ENCODE measurements at regions of chr10 and their contacts with region 1.

Region 1: DNA sequence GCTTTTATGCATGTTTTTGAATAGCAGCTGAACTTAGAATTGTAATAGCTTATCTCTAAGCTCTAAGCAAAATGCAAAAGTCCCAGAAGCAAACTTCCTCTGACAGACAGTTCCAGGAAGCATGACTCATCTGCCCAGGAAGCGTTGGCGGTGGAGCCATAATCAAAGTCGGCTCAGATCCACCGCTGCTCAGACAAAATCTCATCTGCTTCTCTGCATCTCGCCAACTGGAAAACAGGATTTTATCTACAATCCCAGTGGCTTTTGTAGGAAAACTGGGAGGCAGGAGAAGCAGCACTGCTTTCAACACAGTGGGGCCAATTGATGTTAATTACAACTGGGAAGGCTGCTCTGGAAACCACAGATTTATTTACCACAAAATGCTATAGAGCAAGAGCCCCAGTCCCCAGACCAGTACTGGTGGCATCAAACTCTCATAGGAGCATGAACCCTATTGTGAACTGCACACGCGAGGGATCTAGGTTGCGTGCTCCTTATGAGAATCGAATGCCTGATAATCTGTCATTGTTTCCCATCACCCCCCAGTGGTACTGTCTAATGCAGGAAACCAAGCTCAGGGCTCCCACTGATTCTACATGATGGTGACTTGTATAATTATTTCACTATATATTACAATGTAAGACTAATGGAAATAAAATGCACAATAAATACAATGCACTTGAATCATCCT is 99.9 kb downstream of the CUBN start:
- DNase-seq: peak; percentile 92
- H3K4me3 Mint-ChIP-seq: peak overlapping the region; percentile 80
- H3K27ac Mint-ChIP-seq: peak overlapping the region; percentile 90
- H3K4me1 Mint-ChIP-seq: peaks cover 63% of the 10 kb centered on the region
- H3K27me3 Mint-ChIP-seq: peaks cover 2% of the 10 kb centered on the region

Region 2: DNA sequence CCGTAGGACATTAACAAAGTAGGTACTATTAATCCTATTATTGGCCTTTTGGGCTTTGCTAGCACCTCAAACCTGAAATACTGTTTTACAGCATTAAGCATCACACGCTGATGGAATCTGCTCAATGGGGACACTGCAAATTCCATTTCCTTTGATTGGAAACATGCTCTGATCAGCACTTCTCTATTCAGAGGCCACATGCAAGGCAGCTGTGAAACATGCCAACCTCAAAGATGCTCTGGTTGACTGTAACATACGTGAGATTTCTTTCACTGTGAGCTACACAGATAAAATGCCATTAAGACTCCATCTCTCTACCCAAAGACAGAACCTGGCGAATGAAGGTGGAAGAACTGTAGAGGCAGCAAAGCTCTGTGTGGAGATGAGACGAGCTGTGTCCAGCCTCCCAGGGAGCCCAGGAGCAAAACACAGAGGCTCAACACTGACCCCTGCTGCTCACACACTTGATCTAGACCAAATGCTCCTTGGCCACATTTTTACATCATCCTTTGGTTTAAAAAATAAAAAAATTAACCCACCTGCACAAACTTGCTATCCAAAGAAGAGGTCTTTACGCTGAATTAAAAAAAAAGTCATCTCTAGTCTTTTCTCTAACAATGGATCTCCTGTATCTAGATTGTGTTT is 220.5 kb before region 1 on chr10:
- intact Hi-C with region 1: no loop called
- DNase-seq: peak; percentile 83
- H3K4me3 Mint-ChIP-seq: no peak overlapping the region
- H3K27ac Mint-ChIP-seq: no peak overlapping the region
- H3K4me1 Mint-ChIP-seq: peaks cover 10% of the 10 kb centered on the region
- H3K27me3 Mint-ChIP-seq: no peaks in the 10 kb centered on the region

Region 3: GRCh38 chr10:16902606-16903005 is 127.1 kb before region 1 on chr10:
- intact Hi-C with region 1: loop called (anchors 1 kb)
- DNase-seq: peak; percentile 82
- H3K4me3 Mint-ChIP-seq: peak overlapping the region; percentile 13
- H3K27ac Mint-ChIP-seq: peak overlapping the region; percentile 1
- H3K4me1 Mint-ChIP-seq: peaks cover 9% of the 10 kb centered on the region
- H3K27me3 Mint-ChIP-seq: peaks cover 2% of the 10 kb centered on the region

Region 4: GRCh38 chr10:17061418-17061817 is 31.7 kb after region 1 on chr10:
- intact Hi-C with region 1: loop called (anchors 2 kb)
- DNase-seq: no peak
- H3K4me3 Mint-ChIP-seq: no peak overlapping the region
- H3K27ac Mint-ChIP-seq: peak overlapping the region; percentile 35
- H3K4me1 Mint-ChIP-seq: peaks cover 15% of the 10 kb centered on the region
- H3K27me3 Mint-ChIP-seq: peaks cover 10% of the 10 kb centered on the region